PC-9 (cell line): ENCODE measurements at regions of chr1 and their contacts with region 1.

Region 1: GRCh38 chr1:228378090-228378872 is 28.4 kb downstream of the TRIM11 start:
- DNase-seq: peak; percentile 78 to 95
- H3K4me3 ChIP-seq: peak overlapping the region; percentile 67
- H3K27ac ChIP-seq: no peak overlapping the region
- H3K4me1 ChIP-seq: peaks cover 15% of the 10 kb centered on the region
- H3K27me3 ChIP-seq: no peaks in the 10 kb centered on the region
- CTCF ChIP-seq: peak; percentile 82

Region 2: DNA sequence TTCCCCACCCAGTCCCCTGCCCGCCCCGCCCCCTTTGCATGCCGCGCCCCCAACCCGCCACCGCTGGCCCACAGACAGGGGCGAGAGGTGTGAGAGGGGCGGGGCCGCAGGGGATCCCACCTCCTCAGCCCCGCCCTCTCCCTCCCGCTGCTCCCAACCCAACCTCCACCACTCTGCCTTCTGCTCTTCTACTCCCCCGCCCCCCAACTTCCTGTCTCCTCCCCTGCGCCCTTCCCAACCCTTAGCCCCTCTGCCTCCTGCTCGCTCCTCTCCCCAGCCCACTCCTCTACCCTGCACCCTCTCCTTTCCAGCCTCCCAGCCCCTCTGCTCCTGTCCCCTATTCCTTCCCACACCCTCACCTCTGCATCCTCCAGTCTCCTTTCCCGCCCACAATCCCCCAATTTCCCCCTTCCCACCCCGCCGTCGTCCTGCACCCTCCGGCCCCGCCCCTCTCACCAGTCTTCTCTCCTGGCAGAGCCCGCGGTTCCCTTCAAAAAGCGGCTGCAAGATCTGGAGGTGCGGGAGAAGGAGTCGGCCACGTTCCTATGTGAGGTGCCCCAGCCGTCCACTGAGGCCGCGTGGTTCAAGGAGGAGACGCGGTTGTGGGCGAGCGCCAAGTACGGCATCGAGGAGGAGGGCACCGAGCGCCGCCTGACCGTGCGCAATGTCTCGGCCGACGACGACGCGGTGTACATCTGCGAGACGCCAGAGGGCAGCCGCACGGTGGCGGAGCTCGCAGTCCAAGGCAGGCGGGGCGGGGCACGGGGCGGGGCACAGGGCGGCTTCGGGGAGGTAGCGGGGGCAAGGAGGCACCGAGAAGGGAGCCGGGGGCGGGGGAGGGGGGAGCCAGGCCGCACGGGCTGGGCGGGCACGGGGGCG is 165.1 kb before region 1 on chr1:
- CTCF ChIA-PET with region 1: no interaction called
- POLR2A ChIA-PET with region 1: no interaction called
- intact Hi-C with region 1: loop called (anchors 5 kb)
- DNase-seq: peak; percentile 71 to 88
- H3K4me3 ChIP-seq: peak overlapping the region; percentile 62
- H3K27ac ChIP-seq: no peak overlapping the region
- H3K4me1 ChIP-seq: peaks cover 9% of the 10 kb centered on the region
- H3K27me3 ChIP-seq: no peaks in the 10 kb centered on the region
- CTCF ChIP-seq: peak; percentile 60

Region 3: GRCh38 chr1:228416217-228416933 is 38.1 kb after region 1 on chr1 and contains the start of gene TRIM17:
- CTCF ChIA-PET with region 1: no interaction called
- POLR2A ChIA-PET with region 1: no interaction called
- intact Hi-C with region 1: no loop called
- DNase-seq: peak in 1 of 2 experiments; percentile 79
- H3K4me3 ChIP-seq: peak within 1 kb of the TSS; percentile 64
- H3K27ac ChIP-seq: peak within 1 kb of the TSS; percentile 93
- H3K4me1 ChIP-seq: peaks cover 67% of the 10 kb centered on the region
- H3K27me3 ChIP-seq: no peaks in the 10 kb centered on the region
- CTCF ChIP-seq: peak; percentile 63
- total RNA-seq, gene TRIM17: 47.4 and 55.5 TPM in 2 replicates

Region 4: DNA sequence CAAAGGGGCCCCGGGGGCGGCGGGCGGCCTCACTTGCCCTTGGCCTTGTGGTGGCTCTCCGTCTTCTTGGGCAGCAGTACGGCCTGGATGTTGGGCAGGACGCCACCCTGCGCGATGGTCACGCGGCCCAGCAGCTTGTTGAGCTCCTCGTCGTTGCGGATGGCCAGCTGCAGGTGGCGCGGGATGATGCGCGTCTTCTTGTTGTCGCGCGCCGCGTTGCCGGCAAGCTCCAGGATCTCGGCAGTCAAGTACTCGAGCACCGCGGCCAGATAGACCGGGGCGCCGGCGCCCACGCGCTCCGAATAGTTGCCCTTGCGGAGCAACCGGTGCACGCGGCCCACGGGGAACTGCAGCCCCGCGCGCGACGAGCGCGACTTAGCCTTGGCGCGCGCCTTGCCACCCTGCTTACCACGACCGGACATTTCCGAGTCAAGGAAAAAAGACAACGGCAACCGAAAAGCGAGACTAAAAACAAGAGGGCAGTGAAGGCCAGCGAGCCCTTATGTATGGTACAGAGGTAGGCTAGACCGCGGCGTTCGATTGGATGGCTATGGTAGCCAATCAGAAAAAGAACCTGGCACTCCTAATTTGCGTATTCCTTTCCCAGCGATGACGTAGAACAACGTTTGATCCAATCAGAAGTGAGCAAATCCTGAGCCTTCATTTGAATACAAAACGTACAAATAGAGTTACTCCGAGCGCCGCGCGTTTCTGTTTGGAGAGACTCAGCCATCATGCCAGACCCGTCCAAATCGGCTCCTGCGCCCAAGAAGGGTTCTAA is 79.3 kb after region 1 on chr1:
- CTCF ChIA-PET with region 1: no interaction called
- POLR2A ChIA-PET with region 1: interaction called, 3 read pairs
- intact Hi-C with region 1: loop called (anchors 2 kb)
- DNase-seq: peak; percentile 68 to 78
- H3K4me3 ChIP-seq: peak overlapping the region; percentile 55
- H3K27ac ChIP-seq: peak overlapping the region; percentile 49
- H3K4me1 ChIP-seq: peaks cover 20% of the 10 kb centered on the region
- H3K27me3 ChIP-seq: no peaks in the 10 kb centered on the region
- CTCF ChIP-seq: 0 out of 2 replicates have a peak, but pooled peaks have one; percentile 21